ENCODE measurements at regions of chr21 and their contacts with region 1.

Region 1: DNA sequence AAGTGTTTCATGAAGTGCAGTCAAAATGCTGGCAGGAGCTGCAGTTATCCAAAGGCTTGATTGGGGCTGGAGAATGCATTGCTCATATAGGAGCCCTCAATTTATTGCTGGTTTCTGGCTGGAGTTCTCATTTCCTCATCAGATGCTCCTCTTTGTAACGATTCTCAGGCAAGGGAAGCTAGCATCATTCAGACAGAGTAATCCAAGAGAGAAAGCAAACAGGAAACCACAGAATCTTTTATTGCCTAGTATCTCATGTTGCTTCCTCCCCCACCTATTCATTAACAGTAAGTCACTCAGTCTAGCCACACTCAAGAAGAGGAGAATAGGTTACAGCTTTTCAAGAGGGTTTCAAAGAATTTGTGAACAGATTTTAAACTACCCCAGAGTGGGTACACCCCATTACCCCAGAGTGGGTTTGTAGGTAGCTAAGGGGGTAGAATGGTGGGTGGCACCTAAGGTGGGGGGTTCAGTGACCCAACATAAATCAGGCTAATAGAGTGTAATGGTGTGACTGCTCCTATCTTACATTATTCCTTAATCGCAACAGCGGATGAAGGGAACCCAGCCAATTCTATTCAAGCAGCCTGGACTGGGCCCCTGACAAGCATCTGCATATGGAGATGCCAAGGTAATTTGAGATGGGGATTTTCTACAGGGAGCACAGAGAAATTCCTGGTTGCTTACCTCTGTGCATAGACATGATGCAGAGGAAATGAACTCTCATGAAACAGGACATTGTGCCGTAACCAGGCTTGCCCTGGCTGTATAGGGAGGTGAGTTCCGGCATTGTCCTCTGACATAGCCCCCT is 67.1 kb downstream of the KCNJ15 start:
- DNase-seq: no peak
- H3K4me3 Mint-ChIP-seq: no peak overlapping the region
- H3K27ac Mint-ChIP-seq: peak overlapping the region; percentile 10
- H3K4me1 Mint-ChIP-seq: peaks cover 26% of the 10 kb centered on the region
- H3K27me3 Mint-ChIP-seq: no peaks in the 10 kb centered on the region

Region 2: GRCh38 chr21:38244885-38245545 is 78.9 kb before region 1 on chr21:
- CTCF ChIA-PET with region 1: no interaction called
- POLR2A ChIA-PET with region 1: no interaction called
- intact Hi-C with region 1: loop called (anchors 5 kb)
- DNase-seq: peak; percentile 79
- H3K4me3 Mint-ChIP-seq: no peak overlapping the region
- H3K27ac Mint-ChIP-seq: peak overlapping the region; percentile 64
- H3K4me1 Mint-ChIP-seq: peaks cover 26% of the 10 kb centered on the region
- H3K27me3 Mint-ChIP-seq: peaks cover 14% of the 10 kb centered on the region

Region 3: DNA sequence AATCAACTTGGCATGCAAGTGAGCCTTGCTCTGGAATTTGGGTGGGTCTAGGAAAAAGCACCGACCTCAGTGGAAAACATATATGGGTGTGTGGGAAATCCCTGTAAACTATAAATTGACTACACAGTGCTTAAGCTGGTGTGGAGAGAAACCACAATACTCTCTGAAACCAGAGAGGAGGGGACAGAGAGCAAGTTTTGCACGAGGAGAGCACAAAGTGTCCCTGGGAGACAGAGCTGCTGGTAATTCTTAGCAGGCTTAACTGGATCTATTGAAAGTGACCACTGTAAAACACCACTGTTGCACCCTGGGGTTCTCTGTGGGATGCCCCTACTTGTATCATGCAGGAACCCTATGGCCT is 54.4 kb before region 1 on chr21:
- CTCF ChIA-PET with region 1: no interaction called
- POLR2A ChIA-PET with region 1: interaction called, 4 read pairs
- intact Hi-C with region 1: loop called (anchors 1 kb)
- DNase-seq: no peak
- H3K4me3 Mint-ChIP-seq: no peak overlapping the region
- H3K27ac Mint-ChIP-seq: no peak overlapping the region
- H3K4me1 Mint-ChIP-seq: peaks cover 27% of the 10 kb centered on the region
- H3K27me3 Mint-ChIP-seq: peaks cover 13% of the 10 kb centered on the region

Region 4: GRCh38 chr21:38341546-38342012 is 17.7 kb after region 1 on chr21:
- CTCF ChIA-PET with region 1: no interaction called
- POLR2A ChIA-PET with region 1: no interaction called
- intact Hi-C with region 1: no loop called
- DNase-seq: no peak
- H3K4me3 Mint-ChIP-seq: no peak overlapping the region
- H3K27ac Mint-ChIP-seq: no peak overlapping the region
- H3K4me1 Mint-ChIP-seq: no peaks in the 10 kb centered on the region
- H3K27me3 Mint-ChIP-seq: no peaks in the 10 kb centered on the region